ENCODE measurements at regions of chr3 and their contacts with region 1.

Region 1: GRCh38 chr3:172332256-172333041 is 115.8 kb downstream of the GHSR start:
- DNase-seq: peak in 1 of 2 donors; percentile 74
- H3K4me3 ChIP-seq: no peak overlapping the region
- H3K27ac ChIP-seq: peak overlapping the region; percentile 42 to 57
- H3K4me1 ChIP-seq: peaks cover 0 to 12% (median 2%) of the 10 kb centered on the region in 4 donors
- H3K27me3 ChIP-seq: no peaks in the 10 kb centered on the region
- CTCF ChIP-seq: peak; percentile 82 to 87

Region 2: GRCh38 chr3:171944511-171944952 is 387.9 kb before region 1 on chr3:
- intact Hi-C with region 1: no loop called
- DNase-seq: no peak
- H3K4me3 ChIP-seq: no peak overlapping the region
- H3K27ac ChIP-seq: no peak overlapping the region
- H3K4me1 ChIP-seq: peaks cover 0 to 16% (median 0%) of the 10 kb centered on the region in 4 donors
- H3K27me3 ChIP-seq: no peaks in the 10 kb centered on the region
- CTCF ChIP-seq: no peak

Region 3: DNA sequence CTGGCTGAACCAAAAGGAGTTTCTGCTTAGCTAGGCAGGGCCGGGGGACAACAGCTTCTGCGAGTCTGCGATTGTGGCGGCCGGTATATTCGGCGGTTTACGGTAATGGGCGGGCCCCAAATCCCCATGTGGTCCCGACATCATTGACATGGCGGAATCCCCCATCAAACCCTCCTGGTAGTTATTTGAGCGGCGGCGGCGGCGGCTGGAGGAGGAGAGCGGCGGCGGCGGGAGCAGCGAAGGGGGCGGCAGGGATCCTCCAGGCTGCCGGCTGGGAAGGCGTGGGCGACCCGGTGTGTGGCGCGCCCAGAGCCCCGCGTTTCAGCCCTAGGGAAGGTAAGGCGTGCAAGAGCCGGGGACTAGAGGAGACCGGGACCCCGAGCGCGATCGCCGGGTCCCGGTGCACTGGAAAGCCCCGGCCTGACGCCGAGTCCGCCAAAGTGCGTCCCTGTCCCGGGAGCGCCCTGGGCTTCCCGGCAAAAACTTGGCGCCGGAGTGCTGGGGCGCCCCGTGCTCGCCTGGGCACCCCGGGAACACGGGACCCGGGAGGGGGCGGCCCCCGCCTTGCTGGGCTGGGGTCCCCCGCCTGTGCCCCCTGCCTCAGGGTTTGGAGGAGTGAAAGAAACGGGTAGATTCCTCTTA is 292.9 kb before region 1 on chr3 and contains the start of gene FNDC3B:
- intact Hi-C with region 1: loop called (anchors 5 kb)
- DNase-seq: peak; percentile 96 to 97
- H3K4me3 ChIP-seq: peak within 1 kb of the TSS; percentile 70 to 81
- H3K27ac ChIP-seq: peak within 1 kb of the TSS; percentile 97 to 100
- H3K4me1 ChIP-seq: peaks cover 0 to 39% (median 12%) of the 10 kb centered on the region in 4 donors
- H3K27me3 ChIP-seq: no peaks in the 10 kb centered on the region
- CTCF ChIP-seq: no peak

Region 4: DNA sequence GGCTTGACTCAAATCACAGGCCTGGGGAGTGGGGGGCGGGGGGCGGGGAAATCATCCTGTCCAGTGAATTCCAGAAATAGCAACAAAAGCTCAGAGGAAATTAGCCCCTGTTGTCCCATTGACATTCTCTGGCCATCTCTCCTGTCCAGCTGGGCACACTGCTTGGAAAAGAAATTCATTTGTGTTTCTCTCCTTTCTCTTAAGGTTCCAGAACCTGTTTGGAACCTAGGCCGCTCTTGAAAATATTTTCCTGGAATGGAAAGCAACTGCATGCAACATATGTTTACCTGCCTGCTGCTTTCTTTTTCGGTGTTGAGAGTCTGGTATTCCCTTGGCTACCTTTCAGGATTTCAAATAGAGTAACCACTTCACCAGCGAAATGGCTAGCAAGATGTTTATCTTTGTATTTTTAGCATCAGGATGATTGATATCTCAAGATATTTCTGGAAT is 53.2 kb before region 1 on chr3:
- intact Hi-C with region 1: loop called (anchors 2 kb)
- DNase-seq: no peak
- H3K4me3 ChIP-seq: no peak overlapping the region
- H3K27ac ChIP-seq: peak overlapping the region; percentile 50 to 63
- H3K4me1 ChIP-seq: peaks cover 0 to 73% (median 31%) of the 10 kb centered on the region in 4 donors
- H3K27me3 ChIP-seq: no peaks in the 10 kb centered on the region
- CTCF ChIP-seq: no peak

Region 5: GRCh38 chr3:173238091-173238490 is 905.6 kb after region 1 on chr3:
- intact Hi-C with region 1: no loop called
- DNase-seq: no peak
- H3K4me3 ChIP-seq: no peak overlapping the region
- H3K27ac ChIP-seq: no peak overlapping the region
- H3K4me1 ChIP-seq: no peaks in the 10 kb centered on the region
- H3K27me3 ChIP-seq: no peaks in the 10 kb centered on the region
- CTCF ChIP-seq: no peak

Measured in tibial artery (tissue), 4 donors.